CD8-positive, alpha-beta T cell (primary cell): ENCODE measurements at regions of chr2 and their contacts with region 1.

Region 1: DNA sequence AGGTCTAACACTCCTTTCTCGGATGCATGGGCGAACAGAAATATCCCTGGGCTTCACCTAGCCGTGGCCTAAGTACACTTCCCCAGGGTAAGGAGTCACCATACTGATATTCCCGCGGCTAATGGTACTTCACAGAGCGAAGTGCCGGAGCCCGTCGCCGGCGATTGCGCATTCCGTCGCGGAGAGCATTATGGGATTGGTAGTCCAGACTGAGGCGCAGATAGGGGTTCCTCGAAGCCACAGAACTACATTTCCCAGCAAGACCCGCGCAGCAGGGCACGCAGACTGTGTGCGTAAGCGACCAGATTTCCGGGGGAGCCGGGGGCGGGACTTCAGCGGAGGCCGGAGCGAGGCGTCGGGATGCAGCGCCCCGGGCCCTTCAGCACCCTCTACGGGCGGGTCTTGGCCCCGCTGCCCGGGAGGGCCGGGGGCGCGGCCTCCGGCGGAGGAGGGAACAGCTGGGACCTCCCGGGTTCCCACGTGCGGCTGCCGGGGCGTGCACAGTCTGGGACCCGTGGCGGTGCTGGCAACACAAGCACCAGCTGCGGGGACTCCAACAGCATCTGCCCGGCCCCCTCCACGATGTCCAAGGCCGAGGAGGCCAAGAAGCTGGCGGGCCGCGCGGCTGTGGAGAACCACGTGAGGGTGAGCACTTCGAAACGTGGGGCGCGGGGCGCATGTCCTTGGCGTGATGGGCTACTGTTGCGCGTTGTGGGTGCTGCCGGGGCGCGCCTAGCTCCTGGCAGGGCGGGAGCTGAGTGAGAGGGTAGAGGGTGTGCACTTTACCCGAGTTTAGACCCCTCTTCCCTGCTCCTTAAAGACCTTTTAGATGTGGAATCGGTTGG is at the start of gene RPIA:
- DNase-seq: peak; percentile 97 to 100 (median 99)
- ATAC-seq: peak; percentile 94
- H3K4me3 ChIP-seq: peak within 1 kb of the TSS; percentile 69 to 78
- H3K4me3 Mint-ChIP-seq: peak within 1 kb of the TSS; percentile 91
- H3K27ac ChIP-seq: peak within 1 kb of the TSS; percentile 66 to 80
- H3K27ac Mint-ChIP-seq: peak within 1 kb of the TSS; percentile 92
- H3K4me1 ChIP-seq: peaks cover 25% of the 10 kb centered on the region
- H3K4me1 Mint-ChIP-seq: peaks cover 63% of the 10 kb centered on the region
- H3K27me3 ChIP-seq: no peaks in the 10 kb centered on the region
- H3K27me3 Mint-ChIP-seq: no peaks in the 10 kb centered on the region
- CTCF ChIP-seq: peak; percentile 55
- total RNA-seq, gene RPIA: 26.5 to 27.5 TPM

Region 2: GRCh38 chr2:88016086-88016959 is 675.2 kb before region 1 on chr2 and contains the start of gene RNU2-63P:
- CTCF ChIA-PET with region 1: no interaction called
- POLR2A ChIA-PET with region 1: no interaction called
- intact Hi-C with region 1: loop called in 1 of 2 experiments (anchors 5 kb)
- DNase-seq: peak; percentile 65 to 89 (median 79)
- ATAC-seq: peak; percentile 86
- H3K4me3 ChIP-seq: peak within 1 kb of the TSS; percentile 68 to 92
- H3K4me3 Mint-ChIP-seq: peak within 1 kb of the TSS; percentile 100
- H3K27ac ChIP-seq: peak within 1 kb of the TSS; percentile 89 to 90
- H3K27ac Mint-ChIP-seq: peak within 1 kb of the TSS; percentile 100
- H3K4me1 ChIP-seq: peaks cover 5% of the 10 kb centered on the region
- H3K4me1 Mint-ChIP-seq: peaks cover 22% of the 10 kb centered on the region
- H3K27me3 ChIP-seq: no peaks in the 10 kb centered on the region
- H3K27me3 Mint-ChIP-seq: no peaks in the 10 kb centered on the region
- CTCF ChIP-seq: no peak
- total RNA-seq, gene RNU2-63P: 4.4 to 9.1 TPM

Region 3: DNA sequence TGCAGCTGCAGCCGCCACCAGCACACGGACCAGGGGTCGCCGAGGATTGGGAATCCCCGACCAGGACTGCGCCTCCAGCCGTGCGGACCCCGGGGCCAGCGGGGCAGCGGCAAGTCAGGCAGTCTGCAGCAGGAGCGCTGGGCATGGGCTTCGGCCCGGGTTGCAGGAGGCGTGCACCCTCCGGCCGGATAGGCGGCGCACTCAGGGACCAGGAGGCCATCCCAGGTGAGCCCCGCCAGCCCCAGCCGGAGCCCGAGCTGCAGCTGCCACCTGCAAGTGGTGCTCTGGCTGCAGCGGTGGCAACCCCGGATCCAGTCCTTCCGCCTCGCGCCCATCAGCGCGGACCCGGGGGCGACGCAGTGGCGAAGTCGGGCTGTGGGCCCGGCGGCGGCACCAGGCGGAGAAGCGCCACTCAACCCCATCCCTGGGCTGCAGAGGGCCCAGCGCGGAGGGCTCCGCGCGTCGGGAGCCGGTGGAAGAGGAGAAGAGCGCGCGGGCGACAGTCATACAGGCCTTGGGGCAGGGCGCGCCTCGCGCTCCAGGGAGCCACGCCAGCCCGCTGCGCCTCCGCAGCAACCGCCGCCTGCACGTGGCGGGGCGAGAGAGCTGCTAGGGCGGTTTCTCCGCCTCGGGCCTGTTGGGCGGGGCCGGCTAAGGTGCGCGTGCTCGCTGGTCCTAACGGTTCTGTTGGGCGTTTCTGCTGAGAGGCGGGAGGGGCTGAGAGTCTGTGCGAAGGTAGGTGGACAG is 73.8 kb after region 1 on chr2:
- CTCF ChIA-PET with region 1: no interaction called
- POLR2A ChIA-PET with region 1: no interaction called
- intact Hi-C with region 1: loop called in 1 of 2 experiments (anchors 5 kb)
- DNase-seq: peak in 7 of 9 experiments; percentile 19 to 51 (median 37)
- ATAC-seq: peak; percentile 62
- H3K4me3 ChIP-seq: peak overlapping the region; percentile 13 to 30
- H3K4me3 Mint-ChIP-seq: peak overlapping the region; percentile 86
- H3K27ac ChIP-seq: no peak overlapping the region
- H3K27ac Mint-ChIP-seq: peak overlapping the region; percentile 83
- H3K4me1 ChIP-seq: no peaks in the 10 kb centered on the region
- H3K4me1 Mint-ChIP-seq: peaks cover 12% of the 10 kb centered on the region
- H3K27me3 ChIP-seq: no peaks in the 10 kb centered on the region
- H3K27me3 Mint-ChIP-seq: peaks cover 17% of the 10 kb centered on the region
- CTCF ChIP-seq: no peak

Region 4: DNA sequence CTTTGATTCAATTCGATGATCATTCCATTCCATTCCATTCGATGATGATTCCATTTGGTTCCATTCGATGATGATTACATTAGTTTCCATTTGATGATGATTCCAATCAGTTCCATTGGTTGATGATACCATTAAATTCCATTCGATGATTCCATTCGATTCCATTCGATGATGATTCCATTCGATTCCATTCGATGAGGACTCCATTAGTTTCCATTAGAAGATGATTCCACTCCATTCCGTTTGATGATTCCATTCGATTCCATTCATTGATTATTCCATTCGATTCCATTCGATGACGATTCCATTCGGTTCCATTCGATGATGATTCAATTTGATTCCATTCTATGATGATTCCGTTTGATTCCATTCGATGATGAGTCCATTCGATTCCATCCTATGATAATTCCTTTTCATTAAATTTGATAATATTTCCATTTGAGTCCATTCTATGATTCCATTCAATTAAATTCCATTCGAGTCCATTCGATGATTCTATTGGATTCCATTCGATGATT is 1107.2 kb after region 1 on chr2:
- CTCF ChIA-PET with region 1: no interaction called
- POLR2A ChIA-PET with region 1: no interaction called
- intact Hi-C with region 1: no loop called
- DNase-seq: no peak
- ATAC-seq: no peak
- H3K4me3 ChIP-seq: no peak overlapping the region
- H3K4me3 Mint-ChIP-seq: no peak overlapping the region
- H3K27ac ChIP-seq: no peak overlapping the region
- H3K27ac Mint-ChIP-seq: no peak overlapping the region
- H3K4me1 ChIP-seq: no peaks in the 10 kb centered on the region
- H3K4me1 Mint-ChIP-seq: no peaks in the 10 kb centered on the region
- H3K27me3 ChIP-seq: no peaks in the 10 kb centered on the region
- H3K27me3 Mint-ChIP-seq: no peaks in the 10 kb centered on the region
- CTCF ChIP-seq: no peak